CD8-positive, alpha-beta T cell (primary cell): ENCODE measurements at regions of chr2 and their contacts with region 1.

Region 1: GRCh38 chr2:225122583-225123486 is 80.6 kb upstream of the DOCK10 start:
- DNase-seq: peak in 4 of 9 experiments; percentile 4 to 43 (median 28)
- ATAC-seq: no peak
- H3K4me3 ChIP-seq: no peak overlapping the region
- H3K4me3 Mint-ChIP-seq: no peak overlapping the region
- H3K27ac ChIP-seq: no peak overlapping the region
- H3K27ac Mint-ChIP-seq: no peak overlapping the region
- H3K4me1 ChIP-seq: peaks cover 3% of the 10 kb centered on the region
- H3K4me1 Mint-ChIP-seq: peaks cover 3% of the 10 kb centered on the region
- H3K27me3 ChIP-seq: no peaks in the 10 kb centered on the region
- H3K27me3 Mint-ChIP-seq: no peaks in the 10 kb centered on the region
- CTCF ChIP-seq: peak; percentile 61

Region 2: DNA sequence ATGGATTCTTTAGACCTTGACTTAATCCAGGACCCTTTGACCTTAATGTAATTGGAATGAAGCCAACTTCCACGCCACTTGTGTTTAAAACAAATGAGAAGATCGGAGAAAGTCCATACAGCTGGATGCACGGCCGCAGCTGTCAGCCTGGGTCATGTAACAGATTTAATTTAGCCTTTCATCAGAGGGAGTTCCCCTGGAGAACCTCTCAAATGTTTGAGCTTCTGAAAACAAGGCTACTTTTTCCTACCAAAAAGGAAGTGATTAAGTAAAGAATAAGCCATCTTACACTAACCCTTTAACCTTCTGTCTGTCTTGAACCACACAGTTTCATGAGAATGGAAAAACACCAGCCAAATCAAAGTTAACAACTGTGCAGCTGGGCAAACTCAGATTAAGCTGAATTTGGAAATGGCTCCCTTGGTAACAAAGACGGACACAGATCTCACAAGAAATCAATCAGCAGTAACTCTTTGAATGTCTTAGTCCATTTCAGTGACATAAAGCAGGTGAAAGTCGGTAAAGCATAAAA is 184.1 kb before region 1 on chr2:
- CTCF ChIA-PET with region 1: no interaction called
- POLR2A ChIA-PET with region 1: no interaction called
- intact Hi-C with region 1: loop called in 1 of 2 experiments (anchors 10 kb)
- DNase-seq: peak in 1 of 9 experiments; percentile 52
- ATAC-seq: peak; percentile 58
- H3K4me3 ChIP-seq: peak overlapping the region in 1 of 2 experiments; percentile 9
- H3K4me3 Mint-ChIP-seq: peak overlapping the region; percentile 64
- H3K27ac ChIP-seq: peak overlapping the region; percentile 2 to 53
- H3K27ac Mint-ChIP-seq: peak overlapping the region; percentile 94
- H3K4me1 ChIP-seq: peaks cover 91% of the 10 kb centered on the region
- H3K4me1 Mint-ChIP-seq: peaks cover 92% of the 10 kb centered on the region
- H3K27me3 ChIP-seq: no peaks in the 10 kb centered on the region
- H3K27me3 Mint-ChIP-seq: no peaks in the 10 kb centered on the region
- CTCF ChIP-seq: no peak

Region 3: DNA sequence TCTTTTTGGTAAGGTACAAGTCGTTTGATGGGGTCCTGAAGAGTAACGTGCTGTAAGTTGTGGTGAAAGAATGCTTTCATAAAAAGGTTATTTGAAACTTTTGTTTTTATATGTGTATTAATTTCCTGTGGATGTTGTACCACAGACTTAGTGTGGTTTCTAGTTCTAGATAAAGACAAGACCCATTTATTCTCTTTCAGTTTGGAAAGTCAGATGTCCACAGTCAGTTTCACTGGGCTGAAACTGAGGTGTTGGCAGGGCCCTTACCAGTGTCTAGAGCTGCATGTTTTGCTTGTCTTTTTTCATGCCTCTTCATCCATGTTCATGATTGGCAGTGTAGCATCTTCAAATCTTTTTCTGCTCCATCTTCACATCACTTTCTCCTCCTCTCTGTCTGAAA is 58.5 kb before region 1 on chr2:
- CTCF ChIA-PET with region 1: no interaction called
- POLR2A ChIA-PET with region 1: no interaction called
- intact Hi-C with region 1: no loop called
- DNase-seq: peak in 1 of 9 experiments; percentile 17
- ATAC-seq: peak; percentile 49
- H3K4me3 ChIP-seq: no peak overlapping the region
- H3K4me3 Mint-ChIP-seq: peak overlapping the region; percentile 12
- H3K27ac ChIP-seq: peak overlapping the region in 1 of 2 experiments; percentile 31
- H3K27ac Mint-ChIP-seq: peak overlapping the region; percentile 53
- H3K4me1 ChIP-seq: peaks cover 14% of the 10 kb centered on the region
- H3K4me1 Mint-ChIP-seq: peaks cover 36% of the 10 kb centered on the region
- H3K27me3 ChIP-seq: no peaks in the 10 kb centered on the region
- H3K27me3 Mint-ChIP-seq: no peaks in the 10 kb centered on the region
- CTCF ChIP-seq: no peak